GM10248 (cell line): ENCODE measurements at regions of chr9 and their contacts with region 1.

Region 1: GRCh38 chr9:36551129-36551528 is 21.6 kb upstream of the MELK start:
- DNase-seq: no peak
- CTCF ChIP-seq: no peak

Region 2: GRCh38 chr9:36415822-36416515 is 135.2 kb before region 1 on chr9:
- CTCF ChIA-PET with region 1: interaction called, 14 read pairs
- POLR2A ChIA-PET with region 1: no interaction called
- DNase-seq: no peak
- CTCF ChIP-seq: no peak